Right cardiac atrium (tissue), 5 donors: ENCODE measurements at regions of chr19 and their contacts with region 1.

Region 1: DNA sequence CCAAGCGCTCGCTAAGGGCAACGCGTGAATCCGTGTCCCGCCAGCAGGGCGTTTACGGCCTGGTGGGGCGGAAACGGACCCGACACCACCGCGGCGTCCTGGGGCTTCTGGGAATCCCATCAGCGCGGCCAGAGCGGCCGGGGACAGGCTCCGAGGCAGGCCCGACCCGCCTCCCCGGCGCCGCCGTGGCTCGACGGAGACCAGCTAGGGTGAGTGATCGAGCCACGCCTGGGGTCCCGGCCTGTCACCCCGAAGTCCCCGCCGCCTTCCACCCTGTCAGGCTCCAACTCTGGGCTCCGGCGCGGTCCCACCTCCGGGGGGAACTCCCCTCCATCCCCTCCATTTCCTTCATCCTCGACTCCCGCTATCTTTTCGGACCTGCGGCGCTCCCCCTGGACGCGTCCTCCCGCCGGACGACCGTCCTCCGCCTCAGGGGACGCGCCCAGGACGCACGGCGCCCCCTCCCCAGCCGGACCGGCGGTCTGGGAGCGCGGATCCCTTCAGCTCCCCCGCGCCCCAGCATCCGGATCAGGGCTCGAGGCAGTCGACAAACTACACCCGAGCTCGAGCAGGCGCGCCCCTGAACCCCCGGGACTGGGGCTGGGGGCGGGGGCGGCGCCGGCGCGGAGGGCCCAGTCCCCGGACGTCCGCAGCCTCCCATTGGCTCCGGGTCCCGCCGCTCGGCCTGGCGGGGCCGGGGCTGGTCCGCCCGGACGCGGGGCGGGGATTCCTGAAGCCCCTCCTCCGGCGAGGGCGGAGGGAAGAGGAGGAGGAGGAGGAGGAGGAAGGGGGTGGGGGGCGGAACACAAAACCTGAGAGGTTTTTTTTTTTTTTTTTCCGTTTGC is 638 bp upstream of the BICRA start:
- DNase-seq: peak; percentile 95 to 99 (median 98)
- ATAC-seq: peak; percentile 96
- H3K4me3 ChIP-seq: peak overlapping the region; percentile 57
- H3K27ac ChIP-seq: peak overlapping the region; percentile 88
- H3K4me1 ChIP-seq: no peaks in the 10 kb centered on the region
- H3K27me3 ChIP-seq: no peaks in the 10 kb centered on the region

Region 2: DNA sequence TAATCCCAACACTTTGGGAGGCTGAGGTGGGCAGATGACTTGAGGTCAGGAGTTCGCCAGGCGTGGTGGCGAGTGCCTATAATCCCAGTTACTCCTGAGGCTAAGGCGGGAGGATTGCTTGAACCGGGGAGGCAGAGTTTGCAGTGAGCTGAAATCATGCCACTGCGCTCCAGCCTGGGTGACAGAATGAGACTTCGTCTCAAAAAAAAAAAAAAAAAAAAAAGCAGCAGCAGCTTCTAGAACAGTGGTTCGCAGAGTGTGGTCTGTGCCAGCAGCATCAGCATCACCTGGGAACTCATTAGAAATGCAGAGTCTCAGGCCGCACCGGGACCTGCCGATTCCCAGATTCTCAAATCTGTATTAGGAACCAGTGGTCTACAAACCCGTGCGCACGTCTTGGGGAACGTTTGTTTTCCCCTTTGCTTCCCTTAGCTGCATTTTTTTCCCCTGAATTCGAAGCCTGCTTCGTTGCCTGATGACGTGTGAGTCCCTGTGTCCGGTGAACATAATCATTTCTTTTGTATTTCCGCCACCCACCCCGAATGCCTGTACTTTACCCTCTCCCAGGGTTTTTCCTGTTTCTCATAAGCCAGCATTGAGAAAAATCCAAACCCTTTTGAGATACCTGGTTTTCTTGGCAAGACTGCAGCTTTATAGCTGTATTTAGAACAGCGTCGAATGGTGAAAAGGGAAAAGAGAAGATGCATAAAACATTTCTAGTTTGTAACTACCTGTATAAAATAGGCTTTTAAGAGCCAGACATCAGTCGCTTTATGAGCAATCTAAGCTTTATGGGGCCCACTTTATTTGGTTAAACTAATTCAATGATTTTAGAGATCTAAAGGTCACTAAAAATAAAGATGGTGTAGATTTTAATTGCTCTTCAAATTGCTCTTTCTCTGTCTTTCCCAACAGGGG is 50.4 kb after region 1 on chr19:
- intact Hi-C with region 1: loop called in 3 of 4 experiments (anchors 5 to 10 kb)
- DNase-seq: peak in 2 of 3 donors; percentile 27 to 30
- ATAC-seq: no peak
- H3K4me3 ChIP-seq: no peak overlapping the region
- H3K27ac ChIP-seq: no peak overlapping the region
- H3K4me1 ChIP-seq: peaks cover 24% of the 10 kb centered on the region
- H3K27me3 ChIP-seq: no peaks in the 10 kb centered on the region